Heart right ventricle (tissue), 16 donors: ENCODE measurements at regions of chr12 and their contacts with region 1.

Region 1: DNA sequence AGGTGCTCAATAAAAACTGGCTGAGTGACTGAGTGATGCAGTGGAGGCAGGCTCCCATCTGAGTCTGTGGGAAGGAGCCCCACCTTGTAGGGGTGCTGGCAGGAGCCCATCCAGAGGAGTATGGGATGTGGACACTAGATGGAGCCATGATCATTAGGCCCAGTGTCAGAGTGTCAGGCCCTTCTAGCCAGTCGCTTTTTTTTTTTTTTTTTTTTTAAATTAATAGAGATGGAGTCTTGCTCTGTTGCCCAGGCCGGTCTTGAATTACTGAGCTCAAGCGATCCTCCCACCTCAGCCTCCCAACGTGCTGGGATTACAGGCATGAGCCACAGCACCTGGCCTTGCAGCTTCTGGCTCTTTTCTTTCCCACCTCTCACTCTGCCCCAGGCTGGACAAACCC is 11.5 kb downstream of the RITA1 start:
- DNase-seq: peak in 1 of 2 donors; percentile 80
- ATAC-seq: peak; percentile 77 to 91 (median 87)
- H3K4me3 ChIP-seq: no peak overlapping the region
- H3K27ac ChIP-seq: no peak overlapping the region
- H3K4me1 ChIP-seq: peaks cover 0 to 52% (median 18%) of the 10 kb centered on the region in 9 donors
- H3K27me3 ChIP-seq: no peaks in the 10 kb centered on the region
- CTCF ChIP-seq: peak; percentile 48 to 84 (median 75)

Region 2: GRCh38 chr12:113232840-113233585 is 36.0 kb after region 1 on chr12:
- intact Hi-C with region 1: loop called in 2 of 10 experiments (anchors 5 kb)
- DNase-seq: peak; percentile 39 to 57
- ATAC-seq: peak; percentile 55 to 71 (median 62)
- H3K4me3 ChIP-seq: peak overlapping the region in 1 of 10 donors; percentile 33
- H3K27ac ChIP-seq: peak overlapping the region; percentile 74 to 98 (median 87)
- H3K4me1 ChIP-seq: peaks cover 52 to 99% (median 95%) of the 10 kb centered on the region in 9 donors
- H3K27me3 ChIP-seq: no peaks in the 10 kb centered on the region
- CTCF ChIP-seq: peak in 1 of 9 donors; percentile 16

Region 3: DNA sequence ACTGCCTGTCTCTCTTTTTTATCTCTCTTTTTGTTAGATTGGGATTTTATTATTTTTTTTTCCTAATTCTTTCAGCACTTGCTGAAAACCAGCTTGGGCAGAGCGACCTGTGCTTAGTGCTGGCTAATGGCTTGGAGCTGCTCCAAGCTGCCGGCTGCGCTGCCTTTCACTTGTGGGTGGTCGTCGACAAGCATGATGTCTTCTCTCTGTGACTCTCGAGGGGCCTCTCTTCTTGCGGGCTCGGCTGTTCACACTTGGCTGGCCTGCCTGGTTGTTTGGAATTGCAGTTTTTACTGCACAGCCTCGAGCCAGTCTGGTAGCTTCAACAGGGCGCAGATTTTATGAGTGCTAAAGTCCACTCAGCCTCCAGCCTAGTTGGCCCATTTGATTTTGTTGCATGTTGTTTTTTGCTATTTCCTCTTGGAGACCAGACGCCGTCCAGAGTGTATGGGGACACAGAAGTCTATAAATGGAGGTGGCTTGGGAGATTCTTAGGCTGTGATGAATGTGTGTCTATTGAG is 42.9 kb after region 1 on chr12:
- intact Hi-C with region 1: loop called in 1 of 10 experiments (anchors 5 kb)
- DNase-seq: peak in 1 of 2 donors; percentile 59
- ATAC-seq: peak in 6 of 8 donors; percentile 4 to 38 (median 10)
- H3K4me3 ChIP-seq: no peak overlapping the region
- H3K27ac ChIP-seq: peak overlapping the region; percentile 22 to 98 (median 69)
- H3K4me1 ChIP-seq: peaks cover 31 to 100% (median 87%) of the 10 kb centered on the region in 9 donors
- H3K27me3 ChIP-seq: no peaks in the 10 kb centered on the region
- CTCF ChIP-seq: no peak

Region 4: GRCh38 chr12:113271853-113272561 is 75.0 kb after region 1 on chr12:
- intact Hi-C with region 1: loop called in 2 of 10 experiments (anchors 5 kb)
- DNase-seq: peak; percentile 74 to 85
- ATAC-seq: peak; percentile 78 to 94 (median 90)
- H3K4me3 ChIP-seq: peak overlapping the region in 2 of 10 donors; percentile 2 to 11
- H3K27ac ChIP-seq: peak overlapping the region; percentile 46 to 92 (median 84)
- H3K4me1 ChIP-seq: peaks cover 11 to 46% (median 40%) of the 10 kb centered on the region in 9 donors
- H3K27me3 ChIP-seq: no peaks in the 10 kb centered on the region
- CTCF ChIP-seq: no peak

Region 5: DNA sequence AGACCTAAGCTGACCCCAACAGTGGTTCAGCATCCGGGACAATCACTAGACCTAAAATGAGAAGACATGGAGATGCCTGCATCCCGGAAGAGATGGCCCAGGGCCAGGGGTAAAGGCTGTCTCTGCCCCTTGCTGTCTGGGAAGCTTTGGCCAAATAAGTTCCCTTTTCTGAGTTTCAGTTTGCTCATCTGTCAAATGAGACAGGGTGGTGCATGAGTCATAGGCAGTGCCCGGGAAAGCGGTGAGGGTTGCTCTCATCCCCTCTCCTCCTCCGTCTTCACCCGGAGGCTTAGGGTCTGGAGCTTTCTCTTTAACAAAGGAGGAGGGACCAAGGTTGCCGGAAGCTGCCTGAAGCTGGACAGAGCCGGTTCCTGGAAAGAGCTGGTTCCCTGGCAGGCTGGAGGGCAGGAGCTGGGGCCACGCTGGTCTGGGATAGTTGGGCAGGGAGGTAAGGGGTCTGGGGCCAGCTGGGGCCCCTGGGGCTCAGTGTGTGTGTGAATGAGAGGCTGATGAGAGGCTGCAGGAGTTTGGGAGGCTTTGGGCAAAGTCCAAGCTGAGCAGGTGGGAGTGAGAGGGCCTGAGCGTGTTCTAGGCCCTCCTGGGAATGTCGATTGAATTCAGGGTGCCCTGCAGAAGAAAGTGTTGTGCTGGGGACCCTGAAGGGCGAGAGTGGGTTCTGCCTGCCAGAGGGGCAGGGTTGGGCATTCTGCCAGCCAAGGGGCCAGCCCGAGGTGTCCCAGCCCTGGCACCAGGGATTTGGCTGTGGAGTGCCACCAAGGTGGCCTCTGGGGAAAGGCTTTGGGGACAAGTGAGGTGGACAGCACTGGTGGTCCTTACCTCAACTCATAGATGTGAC is 225.3 kb after region 1 on chr12 and contains the start of gene SDSL:
- intact Hi-C with region 1: loop called in 9 of 10 experiments (anchors 5 to 10 kb)
- DNase-seq: peak; percentile 56 to 68
- ATAC-seq: peak; percentile 82 to 93 (median 90)
- H3K4me3 ChIP-seq: peak within 1 kb of the TSS in 9 of 10 donors; percentile 18 to 71 (median 60)
- H3K27ac ChIP-seq: peak within 1 kb of the TSS in 6 of 10 donors; percentile 73 to 93 (median 80)
- H3K4me1 ChIP-seq: peaks cover 0 to 44% (median 9%) of the 10 kb centered on the region in 9 donors
- H3K27me3 ChIP-seq: no peaks in the 10 kb centered on the region
- CTCF ChIP-seq: no peak
- total RNA-seq, gene SDSL: 4.0 to 23.4 (median 15.3) TPM